H1 (cell line): ENCODE measurements at regions of chr1 and their contacts with region 1.

Region 1: GRCh38 chr1:63779338-63780211 is 5.8 kb downstream of the ROR1 start:
- DNase-seq: no peak
- H3K4me3 ChIP-seq: peak overlapping the region in 3 of 4 experiments; percentile 16 to 31 (median 19); a peak in 3 of 8 replicates
- H3K27ac ChIP-seq: peak overlapping the region; percentile 53; the same call in 1 of the 2 replicates
- H3K4me1 ChIP-seq: peaks cover 30 to 74% (median 51%) of the 10 kb centered on the region in 4 experiments; a peak in 6 of 7 replicates
- H3K27me3 ChIP-seq: no peaks in the 10 kb centered on the region
- CTCF ChIP-seq: no peak
- EP300 ChIP-seq: no peak
- POLR2A ChIP-seq: no peak
- RAD21 ChIP-seq: no peak

Region 2: GRCh38 chr1:63843884-63844283 is 64.3 kb after region 1 on chr1:
- CTCF ChIA-PET with region 1: interaction called, 11 read pairs
- POLR2A ChIA-PET with region 1: interaction called, 3 read pairs
- DNase-seq: no peak
- H3K4me3 ChIP-seq: no peak overlapping the region
- H3K27ac ChIP-seq: no peak overlapping the region
- H3K4me1 ChIP-seq: peaks cover 0 to 26% (median 16%) of the 10 kb centered on the region in 4 experiments; a peak in 5 of 7 replicates
- H3K27me3 ChIP-seq: peaks cover 0 to 1% (median 0%) of the 10 kb centered on the region in 4 experiments; a peak in 1 of 7 replicates
- CTCF ChIP-seq: peak in 2 of 3 experiments; percentile 11 to 38; a peak in 2 of 4 replicates
- EP300 ChIP-seq: no peak
- POLR2A ChIP-seq: no peak
- RAD21 ChIP-seq: peak in 1 of 2 experiments; percentile 27; a peak in 1 of 4 replicates